Right cardiac atrium (tissue), 5 donors: ENCODE measurements at regions of chr1 and their contacts with region 1.

Region 1: DNA sequence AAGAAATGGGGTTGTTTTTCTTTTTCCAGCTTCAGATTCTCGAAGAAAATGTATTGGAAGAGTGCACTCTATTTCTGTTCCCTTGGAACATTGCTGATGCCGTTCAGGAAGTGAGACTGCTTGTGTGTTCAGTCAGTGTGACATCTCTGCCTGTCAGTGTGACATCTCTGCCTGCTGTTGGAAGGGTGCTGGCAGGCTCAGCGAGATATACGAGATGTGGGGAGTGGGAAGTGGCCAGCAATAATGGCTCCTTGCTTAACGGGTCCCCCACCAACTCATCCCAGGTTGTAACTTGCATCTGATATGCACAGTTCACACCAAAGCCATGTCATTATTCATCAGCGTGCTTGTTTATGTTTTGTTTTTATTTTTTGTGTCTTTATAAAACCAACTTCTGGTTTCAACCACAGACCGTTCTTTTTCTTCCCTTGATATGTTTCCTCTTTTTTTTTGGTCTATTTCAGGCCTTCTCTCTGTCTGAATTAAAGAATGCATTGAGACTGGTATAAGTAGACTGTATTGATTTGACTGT is 145.4 kb downstream of the GALNT2 start:
- DNase-seq: peak in 1 of 3 donors; percentile 49
- ATAC-seq: no peak
- H3K4me3 ChIP-seq: no peak overlapping the region
- H3K27ac ChIP-seq: no peak overlapping the region
- H3K4me1 ChIP-seq: peaks cover 25% of the 10 kb centered on the region
- H3K27me3 ChIP-seq: no peaks in the 10 kb centered on the region

Region 2: DNA sequence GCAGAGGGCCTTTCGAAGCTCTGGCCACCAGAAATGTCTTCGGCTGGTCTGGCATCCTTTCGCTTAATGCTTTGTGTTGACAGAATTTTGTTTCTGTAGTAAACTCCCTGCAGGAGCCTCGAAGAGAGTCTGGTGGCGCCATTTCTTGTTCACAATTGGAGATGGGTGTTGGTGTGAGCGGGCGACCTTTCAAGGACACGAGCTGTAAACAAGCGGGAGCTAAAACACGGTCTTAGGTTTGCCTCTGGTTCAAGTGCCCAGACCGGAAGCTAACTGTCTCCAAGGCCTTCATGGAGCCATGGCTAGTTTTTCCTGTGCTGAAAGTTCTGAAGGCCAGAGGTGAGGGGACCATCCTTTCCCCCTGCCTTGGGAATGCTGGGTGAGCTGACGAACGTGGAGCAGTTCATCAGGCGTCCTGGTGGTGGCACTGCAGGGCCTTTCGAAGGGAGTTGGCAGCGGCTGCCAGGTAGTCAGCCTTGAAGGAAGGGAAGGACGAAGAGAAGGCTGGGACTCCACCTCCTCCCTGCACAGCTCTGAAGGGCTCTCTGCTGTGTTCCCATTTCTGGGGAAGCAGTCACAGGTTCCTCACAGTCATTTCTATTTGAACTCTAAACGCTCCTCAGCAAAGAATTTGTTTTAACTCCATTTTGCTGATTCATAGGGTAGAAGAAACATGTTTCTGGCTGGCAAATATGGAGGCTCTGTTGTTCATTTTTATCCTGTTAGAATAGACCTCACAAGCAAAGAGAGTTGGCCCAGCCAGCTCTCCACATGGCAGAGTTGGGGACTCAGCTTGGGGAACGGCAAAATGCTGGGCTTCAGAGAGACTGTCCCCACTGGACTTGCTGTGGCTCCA is 551.2 kb before region 1 on chr1:
- intact Hi-C with region 1: loop called in 1 of 4 experiments (anchors 5 kb)
- DNase-seq: peak; percentile 79 to 93 (median 90)
- ATAC-seq: peak; percentile 87 to 92
- H3K4me3 ChIP-seq: no peak overlapping the region
- H3K27ac ChIP-seq: no peak overlapping the region
- H3K4me1 ChIP-seq: peaks cover 3% of the 10 kb centered on the region
- H3K27me3 ChIP-seq: no peaks in the 10 kb centered on the region

Region 3: GRCh38 chr1:230149751-230150584 is 62.5 kb before region 1 on chr1:
- intact Hi-C with region 1: no loop called
- DNase-seq: no peak
- ATAC-seq: no peak
- H3K4me3 ChIP-seq: no peak overlapping the region
- H3K27ac ChIP-seq: no peak overlapping the region
- H3K4me1 ChIP-seq: peaks cover 37% of the 10 kb centered on the region
- H3K27me3 ChIP-seq: no peaks in the 10 kb centered on the region

Region 4: DNA sequence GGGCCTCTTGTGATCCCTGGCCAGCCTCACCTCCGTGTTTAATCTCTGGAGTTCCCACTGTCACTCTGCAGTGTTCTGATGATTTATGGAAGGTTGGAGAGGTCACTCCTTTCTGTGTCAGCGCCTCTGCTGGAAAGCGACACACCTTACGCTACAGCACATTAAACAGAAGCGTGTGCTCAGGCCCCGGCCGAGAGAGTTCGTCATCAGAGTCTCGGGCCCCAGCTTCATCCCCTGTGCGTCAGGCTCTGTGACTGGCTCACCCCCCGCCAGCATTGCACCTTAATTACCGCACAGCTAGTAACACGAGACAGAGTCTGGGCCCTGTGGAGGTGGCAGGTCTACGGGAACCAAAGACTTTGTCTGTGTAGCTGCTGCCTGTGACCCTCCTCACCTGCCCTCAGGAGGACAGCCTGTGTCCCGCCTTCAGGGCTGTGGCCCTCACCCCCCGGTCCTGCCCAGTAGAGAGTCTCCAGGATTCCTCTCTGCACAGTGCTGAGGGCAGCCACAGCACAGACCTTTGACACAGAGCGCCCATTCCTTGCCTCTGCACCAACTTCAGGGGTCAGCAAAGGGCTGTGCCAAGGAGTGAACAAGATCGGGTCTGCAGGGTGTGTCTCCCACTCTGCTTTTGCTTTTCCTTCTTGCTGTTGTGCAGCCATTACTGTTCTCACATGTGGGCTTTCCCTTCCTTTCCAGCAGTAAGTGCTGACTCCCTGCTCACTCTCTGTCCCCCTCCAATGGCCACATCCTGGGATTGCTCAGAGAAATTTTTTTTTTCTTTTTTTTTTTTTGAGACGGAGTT is 56.1 kb after region 1 on chr1:
- intact Hi-C with region 1: no loop called
- DNase-seq: no peak
- ATAC-seq: peak; percentile 73 to 75
- H3K4me3 ChIP-seq: no peak overlapping the region
- H3K27ac ChIP-seq: no peak overlapping the region
- H3K4me1 ChIP-seq: peaks cover 4% of the 10 kb centered on the region
- H3K27me3 ChIP-seq: no peaks in the 10 kb centered on the region